Activated T-helper 1 cell treated with anti-CD3 and anti-CD28 coated beads, Interleukin-12 subunit alpha, Interleukin-12 subunit beta, Interleukin-2, Interleukin-4 antibody, amounts not matched to agents 30 ng/mL and 10 ng/mL and 1 ng/mL, durations not matched to agents 14 hours and 24 hours and 36 hours (primary cell): ENCODE measurements at regions of chr1 and their contacts with region 1.

Region 1: GRCh38 chr1:229430761-229431283 is 3.1 kb downstream of the ACTA1 start:
- DNase-seq: no peak
- H3K4me3 Mint-ChIP-seq: peak overlapping the region; percentile 64
- H3K27ac Mint-ChIP-seq: peak overlapping the region; percentile 75
- H3K4me1 Mint-ChIP-seq: peaks cover 8% of the 10 kb centered on the region
- H3K27me3 Mint-ChIP-seq: peaks cover 79% of the 10 kb centered on the region

Region 2: GRCh38 chr1:229408458-229409037 is 22.3 kb before region 1 on chr1:
- intact Hi-C with region 1: loop called (anchors 2 kb)
- DNase-seq: no peak
- H3K4me3 Mint-ChIP-seq: no peak overlapping the region
- H3K27ac Mint-ChIP-seq: no peak overlapping the region
- H3K4me1 Mint-ChIP-seq: peaks cover 14% of the 10 kb centered on the region
- H3K27me3 Mint-ChIP-seq: peaks cover 79% of the 10 kb centered on the region